Breast epithelium (tissue), 4 donors: ENCODE measurements at regions of chr12 and their contacts with region 1.

Region 1: DNA sequence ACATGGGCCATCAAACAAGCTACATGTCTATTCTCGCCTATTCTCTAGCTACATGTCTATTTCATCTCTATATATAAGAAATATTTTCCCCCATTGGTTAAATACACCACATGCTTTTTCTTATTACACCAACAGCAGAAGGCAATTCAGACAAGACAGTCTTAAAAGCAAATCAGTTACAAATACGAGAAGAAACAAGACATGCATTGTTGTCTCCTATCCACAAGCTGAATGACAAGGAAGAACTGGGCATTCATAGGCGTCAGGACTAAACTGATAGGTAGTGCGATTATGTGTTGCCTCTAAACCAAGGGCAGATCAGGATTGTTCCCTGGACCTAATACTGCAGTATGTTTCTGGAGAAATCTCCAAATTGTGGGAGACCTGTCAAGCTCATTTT is 19.4 kb downstream of the SLC2A13 start:
- DNase-seq: no peak
- H3K4me3 ChIP-seq: no peak overlapping the region
- H3K27ac ChIP-seq: no peak overlapping the region
- H3K4me1 ChIP-seq: no peaks in the 10 kb centered on the region
- H3K27me3 ChIP-seq: no peaks in the 10 kb centered on the region
- CTCF ChIP-seq: no peak
- POLR2A ChIP-seq: no peak

Region 2: DNA sequence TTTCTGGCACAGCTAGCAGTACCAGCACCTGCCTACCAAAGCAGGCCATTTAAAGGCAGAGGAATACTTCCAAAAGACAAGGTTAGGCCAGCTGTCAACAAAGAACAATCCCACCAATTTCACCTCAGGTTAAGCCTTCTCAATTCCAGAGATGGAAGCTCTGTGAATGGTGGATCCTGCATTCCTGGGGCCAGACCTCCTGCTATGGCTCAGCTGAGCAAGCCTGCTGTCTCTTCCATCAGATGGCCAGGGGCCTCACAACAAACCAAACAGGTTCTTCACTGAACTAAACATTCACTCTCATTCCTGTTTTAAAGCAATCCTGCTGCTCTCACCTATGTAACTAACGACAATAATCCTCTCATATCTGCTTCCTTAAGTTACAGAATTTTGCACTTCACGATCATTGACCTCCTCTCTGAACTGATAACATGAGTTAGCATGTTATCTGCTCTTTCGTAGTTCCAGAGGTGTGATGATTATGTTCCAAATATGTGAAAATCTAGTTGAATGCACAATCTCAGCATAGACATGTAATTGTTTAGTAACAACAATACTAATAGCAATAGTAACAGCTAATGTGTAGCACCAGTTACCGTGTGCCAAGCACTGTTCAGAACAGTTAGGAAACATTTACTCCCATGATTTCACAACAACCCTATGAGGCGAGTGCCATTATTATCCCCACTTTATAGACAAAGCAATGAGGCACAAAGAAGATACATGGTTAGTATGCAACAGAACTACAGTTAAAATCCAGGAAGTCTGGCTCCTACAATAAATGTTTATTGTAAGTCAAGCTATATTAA is 53.8 kb before region 1 on chr12:
- intact Hi-C with region 1: loop called (anchors 2 kb)
- DNase-seq: peak in 1 of 2 donors; percentile 57
- H3K4me3 ChIP-seq: no peak overlapping the region
- H3K27ac ChIP-seq: peak overlapping the region in 1 of 2 donors; percentile 8
- H3K4me1 ChIP-seq: no peaks in the 10 kb centered on the region
- H3K27me3 ChIP-seq: no peaks in the 10 kb centered on the region
- CTCF ChIP-seq: no peak
- POLR2A ChIP-seq: no peak

Region 3: DNA sequence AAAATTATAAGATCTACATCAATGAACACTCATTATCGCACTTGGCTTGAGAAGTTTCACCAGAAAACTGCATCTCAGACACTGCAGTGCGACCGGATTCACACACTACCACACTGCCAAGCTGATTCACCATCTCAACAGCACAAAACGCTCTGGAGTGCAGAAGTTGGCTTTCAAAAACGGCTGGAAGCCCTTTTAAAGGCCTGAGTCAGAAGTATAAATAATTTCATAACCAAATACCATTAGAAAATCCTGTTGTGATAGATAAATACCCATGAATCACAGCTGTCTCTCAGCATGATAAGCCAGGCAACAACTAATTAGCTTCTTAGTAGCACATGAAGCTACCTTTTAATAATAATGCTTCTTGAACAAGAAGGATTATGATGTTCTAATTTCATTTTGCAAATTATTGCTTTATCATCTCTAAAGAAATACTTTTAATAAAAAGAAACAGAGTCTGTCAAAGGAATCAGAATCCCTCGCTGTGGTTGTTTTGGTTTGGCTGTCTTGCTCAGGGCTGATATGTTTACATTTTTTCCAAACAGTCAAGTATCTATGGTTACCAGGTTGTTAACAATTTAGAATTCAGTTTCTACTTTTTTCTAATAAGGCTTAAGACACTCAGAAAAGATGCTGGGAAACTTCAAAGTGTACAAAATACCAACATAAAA is 31.8 kb before region 1 on chr12:
- intact Hi-C with region 1: no loop called
- DNase-seq: no peak
- H3K4me3 ChIP-seq: no peak overlapping the region
- H3K27ac ChIP-seq: no peak overlapping the region
- H3K4me1 ChIP-seq: no peaks in the 10 kb centered on the region
- H3K27me3 ChIP-seq: no peaks in the 10 kb centered on the region
- CTCF ChIP-seq: no peak
- POLR2A ChIP-seq: no peak